Calu3 (cell line): ENCODE measurements at regions of chr16 and their contacts with region 1.

Region 1: DNA sequence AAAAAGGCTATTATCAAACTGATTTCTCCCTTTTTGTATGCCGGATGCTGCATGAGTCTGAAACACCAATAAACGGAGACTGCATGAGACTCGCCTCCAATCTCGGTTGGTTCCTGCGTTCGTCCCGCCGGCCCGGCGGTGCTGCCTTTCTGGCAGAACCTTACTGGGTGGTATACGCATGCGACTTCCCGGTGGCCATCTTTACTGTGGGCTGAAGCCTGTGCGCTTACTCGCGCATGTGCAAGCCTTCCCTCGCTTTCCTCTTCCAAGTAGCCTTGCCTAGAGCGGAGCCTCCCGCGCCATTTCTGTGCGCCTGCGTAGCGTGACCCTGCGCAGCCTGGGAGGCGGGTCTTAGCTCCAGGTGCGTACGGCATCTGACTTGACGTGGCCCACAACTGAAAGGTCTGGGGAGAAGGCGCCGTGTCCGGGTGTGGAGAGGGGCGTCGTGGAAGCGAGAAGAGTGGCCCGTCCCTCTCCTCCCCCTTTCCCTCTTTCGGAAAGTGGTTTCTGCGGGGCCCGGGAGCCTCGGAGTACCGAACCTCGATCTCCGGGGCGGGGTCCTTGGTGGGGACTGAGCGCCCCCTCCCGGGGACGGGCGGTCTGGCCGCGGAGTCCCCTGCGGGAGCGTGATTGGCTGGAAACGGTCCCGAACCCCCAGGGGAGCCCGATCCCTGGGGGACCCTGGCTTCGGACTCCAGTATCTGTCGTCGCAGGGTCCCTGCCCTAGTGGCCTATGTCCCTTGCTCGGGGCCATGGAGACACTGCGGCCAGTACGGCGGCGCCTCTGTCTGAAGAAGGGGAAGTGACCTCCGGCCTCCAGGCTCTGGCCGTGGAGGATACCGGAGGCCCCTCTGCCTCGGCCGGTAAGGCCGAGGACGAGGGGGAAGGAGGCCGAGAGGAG is at the start of gene PAGR1:
- DNase-seq: peak; percentile 98
- H3K4me3 Mint-ChIP-seq: peak within 1 kb of the TSS; percentile 96
- H3K27ac Mint-ChIP-seq: peak within 1 kb of the TSS; percentile 94
- H3K4me1 Mint-ChIP-seq: peaks cover 42% of the 10 kb centered on the region
- H3K27me3 Mint-ChIP-seq: peaks cover 39% of the 10 kb centered on the region
- CTCF ChIP-seq: peak; percentile 94
- total RNA-seq, gene PAGR1: 30.4 and 32.0 TPM in 2 replicates

Region 2: DNA sequence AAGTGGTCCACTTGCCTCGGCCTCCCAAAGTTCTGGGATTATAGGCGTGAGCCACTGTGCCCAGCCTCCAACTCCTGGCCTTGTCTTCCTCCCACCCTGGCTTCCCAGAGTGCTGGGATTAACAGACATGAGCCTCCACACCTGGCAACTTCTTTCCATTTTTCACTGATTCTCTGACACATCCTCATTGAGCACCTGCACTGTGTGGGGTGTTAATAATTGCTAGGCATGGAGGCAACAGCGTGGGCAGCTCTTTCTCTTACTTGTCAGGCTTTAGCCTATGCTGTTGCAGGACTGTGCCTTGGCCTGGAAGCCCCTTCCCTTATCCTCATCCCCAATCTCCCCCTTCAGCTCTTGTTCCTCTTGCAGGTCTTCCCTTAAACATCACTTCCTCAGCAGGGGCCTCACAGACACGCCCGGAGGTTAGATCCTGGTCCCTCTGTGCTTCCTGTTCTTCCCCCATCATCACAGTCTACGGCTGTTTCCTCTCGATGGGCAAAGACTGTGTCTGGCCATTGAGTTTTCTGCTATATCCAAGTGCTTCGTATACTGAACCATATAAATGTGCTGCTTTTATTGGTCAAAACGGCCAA is 129.2 kb before region 1 on chr16:
- CTCF ChIA-PET with region 1: no interaction called
- intact Hi-C with region 1: no loop called
- DNase-seq: no peak
- H3K4me3 Mint-ChIP-seq: no peak overlapping the region
- H3K27ac Mint-ChIP-seq: no peak overlapping the region
- H3K4me1 Mint-ChIP-seq: peaks cover 9% of the 10 kb centered on the region
- H3K27me3 Mint-ChIP-seq: no peaks in the 10 kb centered on the region
- CTCF ChIP-seq: no peak

Region 3: GRCh38 chr16:29848420-29849297 is 32.6 kb after region 1 on chr16:
- CTCF ChIA-PET with region 1: interaction called, 19 read pairs
- intact Hi-C with region 1: loop called (anchors 2 kb)
- DNase-seq: peak; percentile 85
- H3K4me3 Mint-ChIP-seq: no peak overlapping the region
- H3K27ac Mint-ChIP-seq: peak overlapping the region; percentile 65
- H3K4me1 Mint-ChIP-seq: no peaks in the 10 kb centered on the region
- H3K27me3 Mint-ChIP-seq: no peaks in the 10 kb centered on the region
- CTCF ChIP-seq: peak; percentile 90

Region 4: GRCh38 chr16:29862884-29863668 is 47.0 kb after region 1 on chr16 and contains the start of gene CDIPT:
- CTCF ChIA-PET with region 1: interaction called, 3 read pairs
- intact Hi-C with region 1: loop called (anchors 5 kb)
- DNase-seq: peak; percentile 95
- H3K4me3 Mint-ChIP-seq: peak within 1 kb of the TSS; percentile 89
- H3K27ac Mint-ChIP-seq: peak within 1 kb of the TSS; percentile 99
- H3K4me1 Mint-ChIP-seq: peaks cover 7% of the 10 kb centered on the region
- H3K27me3 Mint-ChIP-seq: peaks cover 9% of the 10 kb centered on the region
- CTCF ChIP-seq: peak; percentile 23
- total RNA-seq, gene CDIPT: 62.7 and 64.1 TPM in 2 replicates

Region 5: DNA sequence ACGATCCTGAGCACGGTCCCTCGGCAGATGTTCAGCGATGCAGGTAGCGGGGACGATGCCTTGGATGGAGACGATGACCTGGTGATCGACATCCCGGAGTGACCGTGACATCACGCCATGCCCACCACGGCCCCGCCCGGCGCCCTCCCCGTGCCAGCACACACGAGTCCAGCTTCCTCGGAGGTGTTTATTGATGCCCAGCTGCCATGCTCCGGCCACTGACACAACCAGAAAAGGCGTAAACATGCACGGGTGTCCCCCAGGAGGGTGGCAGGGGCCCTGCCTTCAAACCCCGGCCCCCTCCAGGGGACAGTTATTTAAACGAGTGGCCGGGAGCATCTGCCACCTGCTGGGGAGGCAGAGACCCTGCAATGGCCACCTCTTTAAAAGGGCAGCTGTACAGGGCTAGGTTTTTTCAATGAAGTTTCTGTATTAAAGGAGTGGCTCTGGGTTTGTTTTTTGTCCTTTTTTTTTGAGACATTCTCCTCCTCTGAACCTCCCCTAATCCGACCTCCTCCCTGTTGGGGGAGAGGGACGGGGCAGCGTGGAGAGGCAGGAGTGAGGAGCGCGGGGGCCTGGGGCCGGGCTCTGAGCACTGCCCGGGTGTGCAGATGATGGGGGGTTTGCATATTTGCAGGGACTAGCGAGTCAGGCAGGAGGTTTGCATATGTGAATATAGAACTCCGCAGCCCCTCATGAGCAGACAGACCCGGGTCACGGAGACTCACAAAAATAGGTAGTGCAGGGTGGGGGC is 189.5 kb after region 1 on chr16:
- CTCF ChIA-PET with region 1: no interaction called
- intact Hi-C with region 1: loop called (anchors 5 kb)
- DNase-seq: peak; percentile 69
- H3K4me3 Mint-ChIP-seq: no peak overlapping the region
- H3K27ac Mint-ChIP-seq: no peak overlapping the region
- H3K4me1 Mint-ChIP-seq: peaks cover 6% of the 10 kb centered on the region
- H3K27me3 Mint-ChIP-seq: peaks cover 8% of the 10 kb centered on the region
- CTCF ChIP-seq: peak; percentile 87

Region 6: GRCh38 chr16:30024451-30024850 is 208.4 kb after region 1 on chr16:
- CTCF ChIA-PET with region 1: no interaction called
- intact Hi-C with region 1: loop called (anchors 5 kb)
- DNase-seq: no peak
- H3K4me3 Mint-ChIP-seq: no peak overlapping the region
- H3K27ac Mint-ChIP-seq: no peak overlapping the region
- H3K4me1 Mint-ChIP-seq: peaks cover 18% of the 10 kb centered on the region
- H3K27me3 Mint-ChIP-seq: peaks cover 61% of the 10 kb centered on the region
- CTCF ChIP-seq: no peak